ENCODE measurements at regions of chr22 and their contacts with region 1.

Region 1: GRCh38 chr22:21014202-21014725 is 701 bp upstream of the P2RX6 start:
- DNase-seq: peak; percentile 90 to 93
- ATAC-seq: peak; percentile 71 to 89 (median 80)
- H3K4me3 ChIP-seq: peak overlapping the region; percentile 75
- H3K27ac ChIP-seq: peak overlapping the region; percentile 85
- H3K4me1 ChIP-seq: peaks cover 12% of the 10 kb centered on the region
- H3K27me3 ChIP-seq: no peaks in the 10 kb centered on the region
- CTCF ChIP-seq: no peak

Region 2: DNA sequence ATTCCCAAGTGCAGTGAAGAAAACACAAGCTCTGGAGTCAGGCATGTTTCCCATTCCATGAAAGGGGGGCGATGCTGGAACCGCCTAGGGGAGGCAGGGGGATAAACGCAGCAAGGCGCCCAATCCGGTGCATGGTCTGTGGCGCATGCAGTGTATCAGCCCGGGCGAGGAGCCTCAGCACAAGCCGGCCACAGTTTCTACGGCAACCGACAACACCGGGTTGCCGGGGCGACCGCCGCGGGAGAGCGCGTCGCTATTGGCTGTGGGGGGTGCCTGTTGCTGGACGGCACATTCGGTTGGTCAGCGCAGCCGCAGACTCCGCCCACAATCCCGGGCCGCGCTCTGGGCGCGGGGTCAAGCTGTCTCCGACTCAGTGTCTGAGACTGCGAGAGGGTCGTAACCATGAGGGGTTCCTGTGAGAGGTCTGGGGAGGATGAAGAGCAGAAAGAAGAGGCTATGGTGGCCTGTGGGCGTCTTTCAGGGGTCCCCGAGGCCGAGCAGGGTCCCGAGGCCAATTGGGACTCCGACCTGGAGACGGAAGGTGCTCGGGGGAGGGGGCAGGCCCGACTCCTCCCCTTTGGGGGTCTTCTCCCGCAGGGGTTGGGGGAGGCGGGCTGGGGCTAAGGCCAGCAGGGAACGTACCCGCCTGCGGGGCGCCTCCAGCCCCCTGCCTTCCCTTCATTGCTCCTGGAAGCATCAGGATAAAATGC is 31.5 kb after region 1 on chr22 and contains the start of gene LRRC74B:
- intact Hi-C with region 1: loop called (anchors 2 to 5 kb)
- DNase-seq: peak; percentile 92 to 94
- ATAC-seq: peak; percentile 91 to 95 (median 92)
- H3K4me3 ChIP-seq: peak within 1 kb of the TSS; percentile 77
- H3K27ac ChIP-seq: peak within 1 kb of the TSS; percentile 75
- H3K4me1 ChIP-seq: peaks cover 12% of the 10 kb centered on the region
- H3K27me3 ChIP-seq: no peaks in the 10 kb centered on the region
- CTCF ChIP-seq: no peak
- total RNA-seq, gene LRRC74B: 0.22 to 0.30 TPM in 2 of 4 donors, not detected in the others

Region 3: DNA sequence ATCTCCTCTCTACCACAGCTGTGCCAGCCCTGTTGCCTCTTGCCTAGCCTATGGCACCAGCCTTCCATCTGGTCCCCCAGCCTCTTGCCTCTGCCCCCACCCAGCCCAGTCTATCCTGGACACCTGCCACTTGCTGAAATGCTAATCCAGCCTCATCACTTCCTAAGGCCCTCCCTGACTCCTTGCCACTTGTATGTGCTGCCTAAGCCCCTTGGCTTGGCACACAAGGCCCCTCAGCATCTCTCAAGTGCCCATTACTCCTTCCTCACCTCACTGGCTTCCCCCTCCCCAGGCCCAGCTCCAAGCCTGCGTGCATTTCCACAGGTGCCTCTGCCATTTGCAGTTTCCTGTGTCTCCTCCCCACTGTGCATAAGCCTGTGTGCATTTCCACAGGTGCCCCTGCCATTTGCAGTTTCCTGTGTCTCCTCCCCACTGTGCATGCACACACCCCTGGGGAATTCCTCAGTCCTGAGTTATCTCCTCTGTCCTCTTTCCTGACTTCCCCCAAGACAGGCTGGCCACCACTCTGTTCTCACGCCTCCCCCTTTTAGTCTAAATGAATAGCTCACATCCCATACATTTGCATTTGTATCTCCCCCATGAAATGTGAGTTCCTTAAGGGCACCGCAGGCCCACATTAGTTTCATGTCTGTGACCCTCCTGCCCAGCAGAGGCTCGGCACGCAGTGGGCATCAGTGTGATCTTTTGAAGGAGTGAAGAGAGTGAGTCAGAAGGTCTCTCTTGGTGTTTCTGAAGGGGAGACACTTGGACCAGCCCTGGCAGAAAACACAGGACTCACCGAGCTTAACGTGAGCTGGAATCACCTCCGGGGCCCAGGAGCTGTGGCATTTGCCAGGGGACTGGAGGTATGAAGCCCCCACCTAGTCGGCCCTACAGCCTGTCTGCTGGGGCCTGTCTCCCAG is 37.5 kb after region 1 on chr22:
- intact Hi-C with region 1: loop called in 1 of 2 experiments (anchors 5 kb)
- DNase-seq: no peak
- ATAC-seq: no peak
- H3K4me3 ChIP-seq: no peak overlapping the region
- H3K27ac ChIP-seq: no peak overlapping the region
- H3K4me1 ChIP-seq: no peaks in the 10 kb centered on the region
- H3K27me3 ChIP-seq: no peaks in the 10 kb centered on the region
- CTCF ChIP-seq: no peak

Region 4: DNA sequence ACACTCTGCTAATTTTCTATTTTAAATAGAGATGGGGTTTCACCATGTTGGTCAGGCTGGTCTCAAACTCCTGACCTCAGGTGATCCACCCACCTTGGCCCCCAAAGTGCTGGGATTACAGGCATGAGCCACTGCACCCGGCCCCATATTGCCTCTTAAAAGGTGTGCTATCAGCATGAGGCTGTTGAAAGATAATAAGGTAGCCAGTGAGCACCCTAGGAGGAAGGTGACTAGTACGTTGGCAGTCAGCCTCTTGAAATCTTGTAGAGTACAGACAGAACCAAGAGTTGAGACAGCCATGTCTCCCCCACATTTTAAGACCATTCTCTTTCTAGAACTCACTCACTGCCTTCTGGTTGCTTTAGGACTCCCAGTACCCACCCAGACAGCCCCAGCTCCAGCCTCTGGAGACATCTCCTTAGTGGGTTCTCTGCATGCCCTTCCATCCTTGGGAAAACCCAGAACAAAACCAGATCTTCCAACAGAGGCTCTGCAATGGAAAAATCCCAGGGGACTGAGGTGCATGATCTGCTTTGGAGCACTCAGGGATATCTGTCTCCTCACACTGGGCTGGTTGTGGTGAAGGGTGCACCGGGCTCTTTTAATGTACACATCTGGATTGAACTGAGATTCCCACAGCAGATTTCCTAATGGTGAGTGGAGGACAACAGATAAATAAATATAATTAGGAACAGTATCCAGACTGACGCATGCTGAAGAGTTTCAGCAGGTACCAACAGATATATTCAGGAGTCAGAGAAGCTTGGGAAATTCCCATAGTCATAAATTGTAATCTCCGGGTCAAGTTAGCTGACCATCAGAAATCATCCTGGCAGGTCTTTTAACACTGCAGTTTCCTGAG is 80.9 kb after region 1 on chr22:
- intact Hi-C with region 1: no loop called
- DNase-seq: no peak
- ATAC-seq: no peak
- H3K4me3 ChIP-seq: no peak overlapping the region
- H3K27ac ChIP-seq: no peak overlapping the region
- H3K4me1 ChIP-seq: no peaks in the 10 kb centered on the region
- H3K27me3 ChIP-seq: peaks cover 0 to 4% (median 2%) of the 10 kb centered on the region in 3 donors
- CTCF ChIP-seq: no peak

Measured in psoas muscle (tissue), 8 donors.